Activated naive CD4-positive, alpha-beta T cell treated with anti-CD3 and anti-CD28 coated beads, Interleukin-2, amount 10 ng/mL, durations not matched to agents 7 days and 5 days (primary cell): ENCODE measurements at regions of chr1 and their contacts with region 1.

Region 1: DNA sequence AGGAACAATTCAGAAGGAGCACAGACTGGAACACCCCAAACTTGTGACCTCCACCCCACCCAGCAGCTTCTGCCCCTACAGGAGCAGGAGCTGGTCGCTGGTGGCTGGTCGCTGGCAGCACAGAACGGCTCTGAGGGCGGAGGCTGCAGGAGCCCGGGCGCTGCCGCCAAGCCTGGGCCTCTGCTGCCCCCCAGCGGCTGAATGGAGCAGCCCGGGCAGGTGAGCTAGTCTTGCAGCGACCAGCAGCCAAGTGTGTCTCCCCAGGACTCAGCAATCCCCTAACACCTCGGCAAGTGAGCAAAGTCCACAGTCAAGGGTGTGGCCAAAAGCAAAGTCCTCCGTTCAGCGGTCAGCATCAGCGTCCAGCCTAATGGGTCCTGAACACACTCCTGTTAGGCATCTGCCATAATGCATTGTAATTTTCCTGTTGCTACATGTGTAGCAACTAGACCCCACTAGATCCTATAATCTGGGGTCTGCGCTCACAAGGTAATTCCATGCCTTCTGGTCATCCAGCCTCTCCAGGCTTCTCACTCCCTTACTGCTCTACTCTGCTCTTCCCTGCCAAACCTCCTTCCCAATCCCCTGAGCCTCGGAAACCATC is 12.1 kb upstream of the GJB5 start:
- DNase-seq: peak; percentile 83
- H3K4me3 Mint-ChIP-seq: no peak overlapping the region
- H3K27ac Mint-ChIP-seq: no peak overlapping the region
- H3K4me1 Mint-ChIP-seq: no peaks in the 10 kb centered on the region
- H3K27me3 Mint-ChIP-seq: peaks cover 18% of the 10 kb centered on the region

Region 2: GRCh38 chr1:34460193-34460592 is 282.6 kb before region 1 on chr1:
- CTCF ChIA-PET with region 1: interaction called, 49 read pairs
- DNase-seq: peak; percentile 69
- H3K4me3 Mint-ChIP-seq: no peak overlapping the region
- H3K27ac Mint-ChIP-seq: no peak overlapping the region
- H3K4me1 Mint-ChIP-seq: no peaks in the 10 kb centered on the region
- H3K27me3 Mint-ChIP-seq: no peaks in the 10 kb centered on the region

Region 3: DNA sequence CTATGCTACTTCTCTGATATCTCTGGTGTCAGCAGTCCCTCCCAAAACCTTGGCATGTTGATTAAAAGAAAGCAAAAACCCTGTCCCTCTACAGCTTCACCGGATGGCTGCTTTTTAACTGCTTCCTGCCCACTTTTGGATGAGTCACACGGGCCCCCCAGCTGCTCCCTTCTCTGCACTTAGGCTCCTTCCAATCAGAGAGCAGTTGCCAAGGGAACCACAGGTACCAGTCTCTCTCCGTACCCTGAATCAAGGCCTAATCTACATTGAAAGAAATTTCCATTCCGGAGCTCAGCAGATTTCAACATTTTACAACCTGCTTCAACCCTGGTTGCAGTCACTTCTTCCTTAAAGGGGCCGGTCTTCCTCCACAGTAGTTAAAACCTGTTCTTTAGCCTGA is 58.5 kb before region 1 on chr1:
- CTCF ChIA-PET with region 1: interaction called, 10 read pairs
- DNase-seq: peak; percentile 38
- H3K4me3 Mint-ChIP-seq: no peak overlapping the region
- H3K27ac Mint-ChIP-seq: peak overlapping the region; percentile 35
- H3K4me1 Mint-ChIP-seq: peaks cover 13% of the 10 kb centered on the region
- H3K27me3 Mint-ChIP-seq: peaks cover 19% of the 10 kb centered on the region

Region 4: DNA sequence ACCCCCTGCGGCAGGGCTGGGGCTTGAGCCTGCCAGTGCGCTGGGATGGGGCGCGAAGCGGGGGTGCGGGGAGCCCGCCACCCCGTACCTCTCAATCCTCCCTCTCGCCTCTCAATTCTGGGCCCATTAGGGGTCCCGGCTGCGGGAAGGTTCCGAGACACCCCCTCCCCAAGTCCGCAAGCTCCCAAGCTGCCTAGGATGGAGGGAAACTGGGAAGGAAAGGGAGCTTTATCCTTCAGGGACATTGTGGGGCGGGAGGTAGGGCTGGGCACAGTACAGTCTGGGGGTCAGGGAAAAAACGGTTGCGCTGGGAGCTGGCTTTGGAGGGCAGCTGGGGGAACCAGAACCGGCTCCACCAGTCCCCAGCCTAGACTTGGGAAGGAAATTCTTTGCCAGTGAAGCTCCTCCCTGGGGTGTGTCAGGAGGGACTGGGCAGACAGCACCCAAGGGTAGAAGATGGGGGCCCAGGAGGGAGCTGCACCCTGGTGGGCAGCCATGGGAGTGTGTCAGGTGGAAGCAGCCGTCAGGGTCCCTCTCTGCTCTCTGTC is 39.1 kb after region 1 on chr1:
- CTCF ChIA-PET with region 1: no interaction called
- DNase-seq: no peak
- H3K4me3 Mint-ChIP-seq: no peak overlapping the region
- H3K27ac Mint-ChIP-seq: no peak overlapping the region
- H3K4me1 Mint-ChIP-seq: no peaks in the 10 kb centered on the region
- H3K27me3 Mint-ChIP-seq: peaks cover 63% of the 10 kb centered on the region